WTC11 (cell line): ENCODE measurements at regions of chr1 and their contacts with region 1.

Region 1: GRCh38 chr1:226519716-226520598 is 28.6 kb upstream of the STUM start:
- DNase-seq: peak; percentile 35
- ATAC-seq: peak; percentile 78
- H3K4me3 Mint-ChIP-seq: no peak overlapping the region; the same call in 1 of the 2 replicates
- H3K27ac Mint-ChIP-seq: no peak overlapping the region
- H3K4me1 Mint-ChIP-seq: peaks cover 25% of the 10 kb centered on the region
- H3K27me3 Mint-ChIP-seq: peaks cover 21% of the 10 kb centered on the region
- CTCF ChIP-seq: no peak

Region 2: DNA sequence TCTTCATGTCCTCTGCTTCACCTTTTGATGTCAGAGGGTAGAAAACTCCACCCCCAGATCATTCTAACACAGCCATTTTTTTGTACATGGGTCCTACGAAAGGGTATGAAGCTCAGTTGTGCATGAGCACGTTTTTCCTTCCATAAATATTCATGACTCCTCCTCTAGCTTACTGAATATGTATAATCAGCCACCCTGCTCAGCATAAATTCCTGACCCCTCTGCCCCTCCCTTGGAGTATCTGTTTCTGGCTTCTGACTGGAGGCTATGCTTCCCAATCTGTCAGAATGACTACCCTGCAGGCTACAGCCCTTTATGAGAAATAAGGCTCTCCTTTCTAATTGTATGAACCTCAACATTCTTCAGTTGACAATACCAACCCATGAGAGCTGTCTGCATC is 69.3 kb before region 1 on chr1:
- CTCF ChIA-PET with region 1: no interaction called
- POLR2A ChIA-PET with region 1: no interaction called
- DNase-seq: no peak
- ATAC-seq: no peak
- H3K4me3 Mint-ChIP-seq: no peak overlapping the region
- H3K27ac Mint-ChIP-seq: no peak overlapping the region
- H3K4me1 Mint-ChIP-seq: peaks cover 40% of the 10 kb centered on the region
- H3K27me3 Mint-ChIP-seq: no peaks in the 10 kb centered on the region
- CTCF ChIP-seq: no peak

Region 3: GRCh38 chr1:226487921-226488546 is 31.9 kb before region 1 on chr1:
- CTCF ChIA-PET with region 1: no interaction called
- POLR2A ChIA-PET with region 1: no interaction called
- DNase-seq: no peak
- ATAC-seq: no peak
- H3K4me3 Mint-ChIP-seq: no peak overlapping the region
- H3K27ac Mint-ChIP-seq: no peak overlapping the region
- H3K4me1 Mint-ChIP-seq: peaks cover 9% of the 10 kb centered on the region
- H3K27me3 Mint-ChIP-seq: peaks cover 3% of the 10 kb centered on the region
- CTCF ChIP-seq: no peak

Region 4: DNA sequence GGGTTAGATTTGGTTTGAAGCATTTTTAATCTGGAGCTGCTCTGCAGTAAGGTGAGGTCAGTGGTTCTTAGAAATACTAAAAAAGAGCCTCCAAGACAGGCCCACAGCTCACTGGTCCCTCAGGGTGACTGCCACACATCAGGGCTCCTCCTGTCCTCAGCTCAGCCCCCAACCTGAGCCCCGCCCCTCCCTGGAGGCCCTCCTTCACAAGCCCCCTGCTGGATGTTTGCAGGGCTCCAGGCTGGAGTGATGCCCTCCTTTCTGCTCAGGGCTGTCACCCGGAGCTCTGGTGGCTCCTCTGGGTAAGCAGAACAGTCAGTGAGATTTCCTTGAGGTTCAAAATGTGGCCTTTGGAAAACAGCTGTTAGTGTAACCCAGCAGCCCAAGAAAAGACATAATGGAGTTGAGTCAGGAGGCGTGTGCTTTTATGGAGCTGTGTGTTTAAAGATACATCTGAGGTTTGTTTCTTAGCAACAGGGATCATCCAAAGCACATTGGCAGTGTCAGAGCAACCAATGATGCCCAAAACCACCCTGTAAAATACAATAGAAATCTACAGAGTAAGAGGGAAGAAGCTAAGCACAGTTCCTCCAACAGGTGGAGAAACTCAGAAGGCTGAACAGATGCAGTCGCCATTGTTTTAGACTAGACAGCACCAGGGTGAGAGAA is 50.1 kb after region 1 on chr1:
- CTCF ChIA-PET with region 1: interaction called, 21 read pairs
- POLR2A ChIA-PET with region 1: no interaction called
- DNase-seq: peak; percentile 77
- ATAC-seq: peak; percentile 94
- H3K4me3 Mint-ChIP-seq: no peak overlapping the region
- H3K27ac Mint-ChIP-seq: no peak overlapping the region
- H3K4me1 Mint-ChIP-seq: peaks cover 13% of the 10 kb centered on the region
- H3K27me3 Mint-ChIP-seq: no peaks in the 10 kb centered on the region; the same call in 1 of the 2 replicates
- CTCF ChIP-seq: no peak